Right ventricle myocardium superior (tissue), 1 donor: ENCODE measurements at regions of chr10 and their contacts with region 1.

Region 1: GRCh38 chr10:87734987-87735827 is 75.5 kb downstream of the PAPSS2 start:
- DNase-seq: no peak
- ATAC-seq: peak; percentile 90

Region 2: GRCh38 chr10:87531908-87532622 is 203.1 kb before region 1 on chr10:
- intact Hi-C with region 1: loop called (anchors 10 kb)
- DNase-seq: no peak
- ATAC-seq: peak; percentile 78

Region 3: DNA sequence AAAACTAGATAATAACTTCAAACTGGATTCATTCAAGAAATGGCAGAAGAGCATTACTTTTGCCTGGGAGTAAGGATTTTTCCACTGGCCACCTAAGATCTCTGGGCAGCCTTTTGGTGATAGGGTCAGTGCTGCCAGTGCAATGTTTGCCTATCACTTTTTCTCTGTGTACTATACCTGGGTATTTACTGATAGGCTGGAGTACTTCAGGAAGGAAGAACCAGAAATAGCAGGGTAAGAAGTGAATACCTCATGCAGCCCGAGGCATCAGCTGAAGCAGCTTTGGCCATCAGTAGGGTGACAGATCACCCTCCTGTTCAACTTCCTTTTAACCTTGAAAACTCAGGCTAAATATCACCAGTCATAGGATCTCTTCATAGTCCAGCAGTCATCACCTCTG is 81.0 kb before region 1 on chr10:
- intact Hi-C with region 1: loop called (anchors 2 kb)
- DNase-seq: no peak
- ATAC-seq: no peak

Region 4: GRCh38 chr10:87786421-87786820 is 51.2 kb after region 1 on chr10:
- intact Hi-C with region 1: no loop called
- DNase-seq: no peak
- ATAC-seq: no peak